HepG2 (cell line): ENCODE measurements at regions of chr11 and their contacts with region 1.

Region 1: GRCh38 chr11:18383388-18384156 is 10.8 kb upstream of the LDHA start:
- DNase-seq: peak; percentile 91
- ATAC-seq: peak; percentile 83
- H3K4me3 ChIP-seq: peak overlapping the region; percentile 54 to 74 (median 58)
- H3K27ac ChIP-seq: peak overlapping the region; percentile 82
- H3K4me1 ChIP-seq: peaks cover 56% of the 10 kb centered on the region
- H3K27me3 ChIP-seq: no peaks in the 10 kb centered on the region
- CTCF ChIP-seq: no peak
- EP300 ChIP-seq: peak in 1 of 2 experiments; percentile 47; a peak in 1 of 4 replicates
- POLR2A ChIP-seq: peak in 1 of 2 experiments; percentile 28; a peak in 2 of 4 replicates
- RAD21 ChIP-seq: no peak

Region 2: GRCh38 chr11:18395735-18396504 is 12.3 kb after region 1 on chr11:
- CTCF ChIA-PET with region 1: no interaction called
- POLR2A ChIA-PET with region 1: interaction called, 298 read pairs
- in situ Hi-C with region 1: no loop called
- intact Hi-C with region 1: no loop called
- DNase-seq: peak; percentile 97
- ATAC-seq: peak; percentile 83
- H3K4me3 ChIP-seq: peak overlapping the region; percentile 83 to 97 (median 87)
- H3K27ac ChIP-seq: peak overlapping the region; percentile 83
- H3K4me1 ChIP-seq: peaks cover 71% of the 10 kb centered on the region
- H3K27me3 ChIP-seq: no peaks in the 10 kb centered on the region; a peak in 1 of 5 replicates
- CTCF ChIP-seq: no peak; the same call in 1 of the 2 replicates
- EP300 ChIP-seq: peak in 1 of 2 experiments; percentile 40; a peak in 1 of 4 replicates
- POLR2A ChIP-seq: peak; percentile 75 to 90
- RAD21 ChIP-seq: peak; percentile 35; the same call in 1 of the 2 replicates